Activated CD8-positive, alpha-beta T cell treated with anti-CD3 and anti-CD28 coated beads for 36 hours (primary cell): ENCODE measurements at regions of chr17 and their contacts with region 1.

Region 1: GRCh38 chr17:81519284-81519955 is 6.8 kb upstream of the ACTG1 start:
- DNase-seq: peak; percentile 78
- ATAC-seq: peak; percentile 59
- H3K4me3 Mint-ChIP-seq: peak overlapping the region; percentile 35
- H3K27ac Mint-ChIP-seq: no peak overlapping the region
- H3K4me1 Mint-ChIP-seq: peaks cover 25% of the 10 kb centered on the region
- H3K27me3 Mint-ChIP-seq: no peaks in the 10 kb centered on the region
- CTCF ChIP-seq: peak; percentile 76

Region 2: DNA sequence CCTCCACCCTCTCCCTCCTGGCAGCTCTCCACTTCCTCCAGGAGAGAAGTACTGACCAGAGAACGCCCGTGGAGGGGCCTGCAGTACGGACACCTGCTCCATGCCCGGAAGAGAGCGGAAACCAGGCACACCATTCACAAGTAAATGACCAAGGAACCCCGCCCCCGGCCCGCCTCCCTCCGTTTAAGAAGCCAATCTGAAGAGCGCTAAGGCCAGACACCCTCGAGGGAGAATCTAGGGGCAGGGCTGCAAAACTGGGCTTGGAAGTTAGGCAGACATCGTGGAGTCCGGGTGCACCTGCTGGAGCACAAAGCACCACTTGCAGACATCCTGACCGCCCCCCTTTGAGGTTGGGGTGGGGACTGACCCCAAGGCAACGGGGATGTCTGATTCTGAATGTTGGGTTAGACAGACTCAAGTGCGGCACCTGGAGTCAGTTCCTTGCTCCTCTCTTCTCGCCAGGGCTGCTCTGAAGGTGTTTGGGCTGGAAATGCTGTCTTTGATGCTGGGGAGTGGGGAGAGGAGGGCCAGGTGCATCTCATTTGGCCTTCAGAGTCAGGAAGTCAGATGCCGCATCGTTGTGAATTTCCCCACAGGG is 33.7 kb after region 1 on chr17:
- CTCF ChIA-PET with region 1: interaction called, 8 read pairs
- POLR2A ChIA-PET with region 1: interaction called, 22 read pairs
- intact Hi-C with region 1: no loop called
- DNase-seq: peak; percentile 97
- ATAC-seq: peak; percentile 74
- H3K4me3 Mint-ChIP-seq: peak overlapping the region; percentile 92
- H3K27ac Mint-ChIP-seq: peak overlapping the region; percentile 92
- H3K4me1 Mint-ChIP-seq: peaks cover 38% of the 10 kb centered on the region
- H3K27me3 Mint-ChIP-seq: no peaks in the 10 kb centered on the region
- CTCF ChIP-seq: no peak

Region 3: GRCh38 chr17:81693509-81694210 is 174.2 kb after region 1 on chr17:
- CTCF ChIA-PET with region 1: no interaction called
- POLR2A ChIA-PET with region 1: no interaction called
- intact Hi-C with region 1: loop called (anchors 5 kb)
- DNase-seq: no peak
- ATAC-seq: peak; percentile 38
- H3K4me3 Mint-ChIP-seq: no peak overlapping the region
- H3K27ac Mint-ChIP-seq: no peak overlapping the region
- H3K4me1 Mint-ChIP-seq: peaks cover 4% of the 10 kb centered on the region
- H3K27me3 Mint-ChIP-seq: no peaks in the 10 kb centered on the region
- CTCF ChIP-seq: no peak